Activated T-helper 2 cell treated with anti-CD3 and anti-CD28 coated beads, Interferon-gamma antibody, Interleukin-2, Interleukin-4, amounts not matched to agents 10 μg/mL and 5 μg/mL and 100 μg/mL, durations not matched to agents 14 hours and 24 hours and 36 hours (primary cell): ENCODE measurements at regions of chr5 and their contacts with region 1.

Region 1: GRCh38 chr5:40437452-40437861 is 242.3 kb upstream of the PTGER4 start:
- DNase-seq: no peak
- H3K4me3 Mint-ChIP-seq: no peak overlapping the region
- H3K27ac Mint-ChIP-seq: peak overlapping the region; percentile 77
- H3K4me1 Mint-ChIP-seq: peaks cover 74% of the 10 kb centered on the region
- H3K27me3 Mint-ChIP-seq: no peaks in the 10 kb centered on the region

Region 2: GRCh38 chr5:40333459-40334244 is 103.8 kb before region 1 on chr5:
- intact Hi-C with region 1: loop called (anchors 2 kb)
- DNase-seq: no peak
- H3K4me3 Mint-ChIP-seq: no peak overlapping the region
- H3K27ac Mint-ChIP-seq: peak overlapping the region; percentile 43
- H3K4me1 Mint-ChIP-seq: peaks cover 43% of the 10 kb centered on the region
- H3K27me3 Mint-ChIP-seq: no peaks in the 10 kb centered on the region

Region 3: DNA sequence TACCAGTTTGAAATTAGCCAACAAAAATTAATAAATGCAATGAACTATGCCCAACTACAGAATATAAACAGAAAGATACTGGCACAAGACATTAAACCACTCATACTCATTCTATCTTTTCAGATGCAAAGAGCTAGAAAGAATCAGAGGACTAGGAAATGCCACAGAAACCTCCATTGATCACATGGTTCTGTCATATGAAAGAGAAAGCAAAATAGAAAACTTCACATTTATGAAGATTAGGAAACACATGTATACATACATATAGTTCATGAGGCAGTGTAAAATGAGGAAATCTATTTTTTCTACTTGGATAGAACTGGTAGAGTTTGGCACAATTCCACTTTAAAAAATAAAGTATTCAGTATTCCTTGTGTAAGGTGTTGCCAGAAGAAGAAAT is 32.8 kb before region 1 on chr5:
- intact Hi-C with region 1: loop called (anchors 1 kb)
- DNase-seq: no peak
- H3K4me3 Mint-ChIP-seq: peak overlapping the region; percentile 37
- H3K27ac Mint-ChIP-seq: peak overlapping the region; percentile 84
- H3K4me1 Mint-ChIP-seq: peaks cover 77% of the 10 kb centered on the region
- H3K27me3 Mint-ChIP-seq: no peaks in the 10 kb centered on the region

Region 4: GRCh38 chr5:40480392-40480791 is 42.9 kb after region 1 on chr5:
- intact Hi-C with region 1: loop called (anchors 1 kb)
- DNase-seq: peak; percentile 46
- H3K4me3 Mint-ChIP-seq: no peak overlapping the region
- H3K27ac Mint-ChIP-seq: peak overlapping the region; percentile 65
- H3K4me1 Mint-ChIP-seq: peaks cover 60% of the 10 kb centered on the region
- H3K27me3 Mint-ChIP-seq: no peaks in the 10 kb centered on the region

Region 5: GRCh38 chr5:40486437-40487275 is 49.2 kb after region 1 on chr5:
- intact Hi-C with region 1: loop called (anchors 1 kb)
- DNase-seq: peak; percentile 64
- H3K4me3 Mint-ChIP-seq: peak overlapping the region; percentile 19
- H3K27ac Mint-ChIP-seq: peak overlapping the region; percentile 75
- H3K4me1 Mint-ChIP-seq: peaks cover 78% of the 10 kb centered on the region
- H3K27me3 Mint-ChIP-seq: no peaks in the 10 kb centered on the region